ENCODE measurements at regions of chr3 and their contacts with region 1.

Region 1: DNA sequence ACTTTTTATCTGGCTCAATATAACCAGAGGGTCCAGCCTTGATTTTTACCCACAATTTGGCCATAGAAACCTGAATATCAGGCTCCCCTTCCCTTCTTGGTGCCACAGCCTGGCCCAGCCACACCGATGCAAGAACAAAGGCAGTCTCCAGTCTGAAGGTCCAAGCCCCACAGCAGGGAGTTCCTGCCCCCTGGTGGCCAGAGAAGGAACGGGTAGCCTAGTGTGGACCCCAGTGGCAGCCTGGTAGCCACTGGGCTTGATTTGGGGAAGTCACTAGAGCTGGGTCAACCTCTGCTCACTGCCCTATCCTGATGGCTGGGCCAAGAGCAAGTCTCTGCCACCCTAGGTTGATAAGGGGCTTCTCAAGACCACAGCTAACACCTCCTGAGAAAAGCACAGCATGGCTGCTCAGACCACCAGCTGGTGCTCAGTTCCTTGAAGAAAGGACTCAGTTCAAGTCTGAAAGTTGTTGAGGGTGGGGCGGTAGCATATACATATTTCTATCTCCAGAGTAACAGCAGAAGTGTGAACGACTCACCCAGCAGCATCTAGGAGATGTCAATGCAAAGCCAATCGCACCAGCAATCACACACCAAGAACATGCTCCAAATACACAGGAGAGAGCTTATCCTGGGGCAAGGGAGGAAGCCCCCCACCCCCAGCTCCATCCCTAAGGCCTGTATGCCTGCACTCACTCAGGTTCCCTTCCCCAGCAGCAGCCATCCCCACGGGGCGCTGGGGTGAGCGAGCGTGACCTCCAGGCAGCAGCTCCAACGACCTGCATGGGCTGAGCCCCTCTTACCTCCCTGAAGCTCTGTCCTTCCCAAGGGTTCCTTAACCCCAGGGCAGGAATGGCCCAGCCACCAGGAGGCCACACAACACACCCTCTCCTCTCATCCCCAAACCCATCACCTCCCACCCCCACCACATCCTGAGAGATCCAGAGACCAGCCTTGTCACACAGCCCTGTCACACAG is 7.6 kb downstream of the PFKFB4 start:
- DNase-seq: peak; percentile 88
- H3K4me3 ChIP-seq: no peak overlapping the region
- H3K27ac ChIP-seq: no peak overlapping the region
- H3K4me1 ChIP-seq: peaks cover 0 to 13% (median 0%) of the 10 kb centered on the region in 4 donors
- H3K27me3 ChIP-seq: no peaks in the 10 kb centered on the region
- CTCF ChIP-seq: peak; percentile 92 to 97 (median 94)
- EP300 ChIP-seq: no peak
- POLR2A ChIP-seq: no peak

Region 2: GRCh38 chr3:48459773-48460516 is 89.1 kb before region 1 on chr3:
- in situ Hi-C with region 1: loop called in 2 of 4 experiments (anchors 10 kb)
- intact Hi-C with region 1: loop called (anchors 2 kb)
- DNase-seq: no peak
- H3K4me3 ChIP-seq: no peak overlapping the region
- H3K27ac ChIP-seq: no peak overlapping the region
- H3K4me1 ChIP-seq: peaks cover under 1 to 4% (median 2%) of the 10 kb centered on the region in 4 donors
- H3K27me3 ChIP-seq: no peaks in the 10 kb centered on the region
- CTCF ChIP-seq: no peak
- EP300 ChIP-seq: no peak
- POLR2A ChIP-seq: no peak

Region 3: DNA sequence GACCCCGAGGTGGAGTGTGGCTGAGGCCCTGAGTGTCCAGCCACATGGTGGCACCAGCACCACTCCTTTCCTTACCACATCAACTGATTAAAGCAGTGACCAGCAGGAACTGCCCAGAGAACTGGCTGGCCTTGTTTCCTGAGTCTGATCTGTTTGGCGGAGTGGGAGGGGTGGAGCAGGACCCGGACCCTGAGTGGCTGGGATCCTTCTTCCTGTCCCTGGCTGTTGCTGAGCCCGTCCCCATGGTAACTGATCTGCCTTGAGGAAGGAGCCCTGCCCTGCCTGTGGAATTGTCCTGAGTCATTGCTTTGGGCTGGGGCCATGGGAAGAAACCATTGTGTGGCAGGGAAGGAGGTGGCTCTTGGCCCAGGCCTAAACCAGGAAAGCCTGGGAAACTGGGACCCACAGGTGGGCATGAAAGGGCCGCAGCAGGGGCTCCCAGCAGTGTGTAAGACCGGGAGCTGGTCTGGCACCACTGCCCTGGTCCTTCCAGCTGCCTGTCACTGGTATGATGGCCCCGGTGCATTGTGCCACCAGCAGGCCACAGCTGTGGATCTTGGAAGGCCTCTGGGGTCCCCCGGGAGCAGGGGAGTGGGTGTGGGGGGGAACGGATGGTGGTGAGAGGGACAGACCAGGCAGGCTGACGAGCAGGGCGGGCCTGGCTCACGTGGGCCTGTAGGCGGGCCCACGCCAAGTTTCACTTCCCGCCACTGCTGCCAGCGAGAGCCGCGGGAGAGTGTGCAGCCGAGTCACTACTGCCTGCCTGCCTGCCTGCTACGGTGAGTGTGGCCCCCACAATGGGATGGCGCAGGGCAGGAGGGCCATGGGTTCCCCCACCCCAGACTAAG is 83.3 kb before region 1 on chr3:
- in situ Hi-C with region 1: loop called in 1 of 4 experiments (anchors 10 kb)
- intact Hi-C with region 1: loop called (anchors 2 kb)
- DNase-seq: peak; percentile 95
- H3K4me3 ChIP-seq: peak overlapping the region; percentile 37 to 52 (median 46)
- H3K27ac ChIP-seq: peak overlapping the region; percentile 96 to 100 (median 99)
- H3K4me1 ChIP-seq: peaks cover 42 to 60% (median 51%) of the 10 kb centered on the region in 4 donors
- H3K27me3 ChIP-seq: no peaks in the 10 kb centered on the region
- CTCF ChIP-seq: peak; percentile 53 to 83 (median 64)
- EP300 ChIP-seq: no peak
- POLR2A ChIP-seq: peak; percentile 94